Endothelial cell of umbilical vein (primary cell): ENCODE measurements at regions of chr7 and their contacts with region 1.

Region 1: GRCh38 chr7:103074519-103075336 is at the starts of genes ARMC10 and FBXL13:
- DNase-seq: peak; percentile 95
- H3K4me3 ChIP-seq: peak within 1 kb of the TSS; percentile 49 to 76 (median 65)
- H3K27ac ChIP-seq: peak within 1 kb of the TSS; percentile 40
- H3K4me1 ChIP-seq: peaks cover 17% of the 10 kb centered on the region
- H3K27me3 ChIP-seq: no peaks in the 10 kb centered on the region
- CTCF ChIP-seq: peak in 1 of 2 donors; percentile 32
- POLR2A ChIP-seq: peak; percentile 52
- total RNA-seq, gene ARMC10: 29.8 and 39.2 TPM in 2 replicates
- total RNA-seq, gene FBXL13: 4.6 and 5.2 TPM in 2 replicates

Region 2: DNA sequence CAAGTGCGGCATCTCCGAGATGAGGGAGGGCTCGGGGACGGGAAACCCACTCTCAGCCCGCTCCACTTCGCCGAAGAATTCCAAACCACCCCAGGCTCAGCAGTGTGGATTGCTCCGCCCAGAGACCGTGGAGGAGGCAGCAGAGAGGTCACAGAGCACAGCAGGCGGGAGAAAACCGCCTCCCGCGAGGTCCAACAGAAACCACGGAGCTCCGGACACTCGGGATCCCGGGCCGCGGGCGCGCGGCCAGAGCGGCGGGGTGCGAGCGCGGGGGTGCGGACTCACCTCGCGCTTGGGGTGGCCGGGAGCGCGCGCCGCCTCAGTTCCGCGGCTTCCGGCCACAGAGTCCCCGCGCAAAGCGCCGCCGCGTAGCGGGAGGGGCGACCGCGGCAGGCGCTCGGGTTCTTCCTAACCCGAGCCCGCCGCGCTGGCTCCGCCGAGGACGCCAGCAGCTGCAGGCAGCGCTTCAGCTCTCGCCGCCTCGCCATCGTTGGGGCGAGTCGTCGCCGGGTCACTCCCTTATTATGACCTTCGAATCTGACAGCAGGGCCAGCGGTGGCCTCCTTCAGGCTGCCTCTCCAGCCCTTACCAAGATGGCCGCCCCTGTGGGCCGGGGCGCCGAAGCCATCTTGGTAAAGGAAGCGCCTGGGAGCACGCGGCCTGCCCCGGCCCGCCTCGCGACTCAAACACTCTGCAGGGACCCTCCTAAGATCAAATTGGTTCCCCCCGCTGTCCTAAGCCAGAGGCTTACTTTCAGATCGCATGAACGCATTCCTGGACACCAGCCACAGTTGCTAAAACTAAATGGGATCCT is 74.5 kb after region 1 on chr7 and contains the start of gene NAPEPLD:
- CTCF ChIA-PET with region 1: interaction called, 5 read pairs
- POLR2A ChIA-PET with region 1: no interaction called
- dilution Hi-C with region 1: no loop called
- intact Hi-C with region 1: loop called (anchors 1 kb)
- DNase-seq: peak; percentile 90
- H3K4me3 ChIP-seq: peak within 1 kb of the TSS; percentile 67 to 95 (median 94)
- H3K27ac ChIP-seq: peak within 1 kb of the TSS; percentile 70
- H3K4me1 ChIP-seq: peaks cover 10% of the 10 kb centered on the region
- H3K27me3 ChIP-seq: no peaks in the 10 kb centered on the region
- CTCF ChIP-seq: no peak
- POLR2A ChIP-seq: peak; percentile 74
- total RNA-seq, gene NAPEPLD: 6.6 and 6.7 TPM in 2 replicates

Region 3: GRCh38 chr7:103344453-103345149 is 269.9 kb after region 1 on chr7 and contains the start of gene DNAJC2:
- CTCF ChIA-PET with region 1: no interaction called
- POLR2A ChIA-PET with region 1: no interaction called
- dilution Hi-C with region 1: no loop called
- intact Hi-C with region 1: loop called (anchors 2 kb)
- DNase-seq: peak; percentile 86
- H3K4me3 ChIP-seq: peak within 1 kb of the TSS; percentile 91 to 99 (median 94)
- H3K27ac ChIP-seq: peak within 1 kb of the TSS; percentile 85
- H3K4me1 ChIP-seq: peaks cover 29% of the 10 kb centered on the region
- H3K27me3 ChIP-seq: no peaks in the 10 kb centered on the region
- CTCF ChIP-seq: no peak
- POLR2A ChIP-seq: peak; percentile 88
- total RNA-seq, gene DNAJC2: 33.3 and 36.3 TPM in 2 replicates